PC-3 (cell line): ENCODE measurements at regions of chr2 and their contacts with region 1.

Region 1: DNA sequence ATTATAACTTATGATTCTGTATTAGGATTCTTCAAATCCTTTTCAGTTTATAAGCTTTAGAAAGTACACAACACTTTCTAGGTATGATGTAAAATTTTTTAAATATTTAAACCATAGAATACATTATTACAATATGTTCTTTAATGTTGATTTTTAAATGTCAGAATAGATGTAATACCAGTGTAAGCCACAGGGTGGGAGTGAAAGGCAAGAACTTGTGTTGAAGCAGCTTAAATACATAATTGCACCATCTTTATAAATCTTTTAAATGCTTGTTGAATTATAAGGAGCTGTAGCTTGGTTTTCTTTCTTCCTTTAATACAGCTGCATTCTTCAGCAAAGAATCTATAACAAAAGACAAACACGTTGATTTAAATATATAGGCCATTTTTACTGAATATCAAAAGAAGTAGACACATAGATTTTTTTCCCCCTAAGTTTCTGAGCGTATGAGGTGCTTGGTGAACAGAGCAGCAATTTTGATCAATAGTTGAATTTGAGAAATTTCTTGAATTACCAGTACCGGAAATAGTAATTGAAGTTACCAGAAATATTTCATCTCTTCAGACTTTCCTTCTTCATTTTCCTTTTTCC is 63.0 kb downstream of the TANK start:
- DNase-seq: peak; percentile 71
- ATAC-seq: no peak
- H3K4me3 ChIP-seq: no peak overlapping the region
- H3K27ac ChIP-seq: no peak overlapping the region
- H3K4me1 ChIP-seq: peaks cover 9% of the 10 kb centered on the region
- H3K27me3 ChIP-seq: no peaks in the 10 kb centered on the region
- CTCF ChIP-seq: peak; percentile 77

Region 2: DNA sequence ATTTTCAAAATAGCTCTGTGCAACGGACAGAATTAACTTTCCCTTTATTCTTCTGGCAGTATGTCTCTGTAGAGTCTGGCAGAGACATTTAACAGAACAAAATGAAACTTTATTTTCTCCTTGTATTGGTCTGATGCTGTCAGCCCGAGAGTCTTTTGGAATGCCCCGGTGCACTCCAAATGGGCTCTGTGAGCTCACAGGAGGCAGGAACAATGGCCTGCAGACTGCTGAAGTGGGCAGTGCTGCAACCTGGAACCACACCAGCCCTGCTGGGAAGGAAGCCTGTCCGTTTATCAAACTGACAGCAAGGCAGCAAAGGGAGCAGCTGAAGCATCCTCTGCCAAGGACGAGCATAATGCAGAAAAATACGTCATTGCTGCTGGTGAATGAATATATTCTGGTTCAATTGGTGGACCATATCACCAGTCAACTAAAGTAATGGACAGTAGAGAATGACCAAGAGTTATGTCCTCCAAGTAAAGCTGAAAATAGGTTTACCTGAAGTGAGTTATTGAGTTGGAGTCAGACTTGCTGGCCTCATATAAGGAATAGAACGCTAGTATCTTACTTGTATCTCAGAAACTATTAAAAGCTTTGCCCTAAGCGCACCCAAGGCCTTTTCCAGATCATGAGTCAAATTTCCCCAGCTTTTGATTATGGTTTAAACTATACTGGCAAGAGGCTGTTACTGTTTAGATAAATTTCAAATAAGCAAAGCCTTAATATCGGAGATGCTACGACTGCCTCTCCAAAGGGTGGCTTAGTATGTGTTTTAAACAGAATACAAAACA is 270.6 kb before region 1 on chr2:
- CTCF ChIA-PET with region 1: no interaction called
- POLR2A ChIA-PET with region 1: no interaction called
- intact Hi-C with region 1: no loop called
- DNase-seq: no peak
- ATAC-seq: no peak
- H3K4me3 ChIP-seq: no peak overlapping the region
- H3K27ac ChIP-seq: no peak overlapping the region
- H3K4me1 ChIP-seq: peaks cover 6% of the 10 kb centered on the region; the same call in 1 of the 2 replicates
- H3K27me3 ChIP-seq: no peaks in the 10 kb centered on the region
- CTCF ChIP-seq: no peak

Region 3: DNA sequence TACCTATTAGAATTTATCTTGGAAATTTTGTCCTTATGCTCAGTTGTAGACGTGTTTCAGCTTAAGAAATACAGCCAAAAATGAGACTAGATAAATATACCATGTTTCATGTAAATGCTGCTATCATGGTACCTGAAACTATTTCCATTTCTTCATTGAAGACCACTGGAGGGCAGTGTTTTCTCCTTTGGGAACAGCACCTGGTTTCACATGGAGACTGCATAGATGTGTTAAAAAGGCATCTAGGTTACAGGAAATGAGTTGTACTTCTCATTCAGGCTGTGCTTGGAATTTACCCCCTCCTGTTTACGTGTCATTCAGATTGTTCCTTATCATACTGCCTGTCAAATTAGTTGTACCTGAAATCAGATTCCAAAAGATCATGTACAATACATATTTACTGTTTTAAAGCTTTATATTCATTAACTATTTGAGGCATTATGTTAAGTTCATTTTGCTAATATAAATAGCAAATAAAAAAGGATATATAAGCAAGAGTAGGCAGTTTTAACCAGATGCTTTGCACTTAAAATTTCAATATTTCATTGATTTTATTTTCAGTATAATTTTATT is 27.7 kb after region 1 on chr2:
- CTCF ChIA-PET with region 1: interaction called, 5 read pairs
- POLR2A ChIA-PET with region 1: no interaction called
- intact Hi-C with region 1: loop called (anchors 1 kb)
- DNase-seq: peak; percentile 83
- ATAC-seq: peak; percentile 98
- H3K4me3 ChIP-seq: no peak overlapping the region
- H3K27ac ChIP-seq: no peak overlapping the region
- H3K4me1 ChIP-seq: peaks cover 7% of the 10 kb centered on the region; the same call in 1 of the 2 replicates
- H3K27me3 ChIP-seq: no peaks in the 10 kb centered on the region
- CTCF ChIP-seq: peak; percentile 88

Region 4: GRCh38 chr2:161273038-161273760 is 50.0 kb after region 1 on chr2:
- CTCF ChIA-PET with region 1: interaction called, 7 read pairs
- POLR2A ChIA-PET with region 1: interaction called, 7 read pairs
- intact Hi-C with region 1: loop called (anchors 1 kb)
- DNase-seq: peak; percentile 90
- ATAC-seq: peak; percentile 78
- H3K4me3 ChIP-seq: no peak overlapping the region
- H3K27ac ChIP-seq: no peak overlapping the region
- H3K4me1 ChIP-seq: no peaks in the 10 kb centered on the region
- H3K27me3 ChIP-seq: no peaks in the 10 kb centered on the region
- CTCF ChIP-seq: peak; percentile 83

Region 5: GRCh38 chr2:161414042-161415033 is 191.1 kb after region 1 on chr2:
- CTCF ChIA-PET with region 1: no interaction called
- POLR2A ChIA-PET with region 1: no interaction called
- intact Hi-C with region 1: loop called (anchors 5 kb)
- DNase-seq: peak; percentile 57
- ATAC-seq: peak; percentile 77
- H3K4me3 ChIP-seq: peak overlapping the region; percentile 65
- H3K27ac ChIP-seq: no peak overlapping the region
- H3K4me1 ChIP-seq: peaks cover 19% of the 10 kb centered on the region
- H3K27me3 ChIP-seq: no peaks in the 10 kb centered on the region
- CTCF ChIP-seq: 0 out of 2 replicates have a peak, but pooled peaks have one; percentile 9